A549 (cell line): ENCODE measurements at regions of chr9 and their contacts with region 1.

Region 1: DNA sequence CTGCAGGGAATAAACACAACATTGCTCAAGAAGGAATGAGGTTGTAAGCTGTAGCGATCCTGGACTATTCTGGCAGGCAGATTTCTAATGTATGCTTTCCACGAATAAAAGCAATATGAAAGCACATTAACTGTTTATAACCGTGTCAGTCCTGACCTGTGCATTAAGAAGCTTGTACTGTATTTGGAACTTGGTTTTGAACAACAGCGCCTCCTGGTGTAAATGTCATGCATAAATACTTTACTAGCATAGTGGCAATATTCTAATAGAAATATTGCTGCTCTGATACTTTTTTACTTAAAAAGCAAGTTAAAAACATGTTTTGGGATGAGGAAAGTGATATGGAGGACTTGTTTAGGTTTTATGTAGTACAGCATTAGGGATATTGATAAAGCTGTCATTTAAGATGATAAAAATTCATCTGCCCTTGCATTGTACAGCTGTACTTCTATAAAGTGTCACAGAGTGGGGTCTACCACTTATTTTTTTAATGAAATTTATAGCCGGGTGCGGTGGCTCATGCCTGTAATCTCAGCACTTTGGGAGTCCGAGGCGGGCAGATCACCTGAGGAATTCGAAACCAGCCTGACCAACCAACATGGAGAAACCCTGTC is 70.7 kb upstream of the GNE start:
- DNase-seq: peak; percentile 72 to 82
- ATAC-seq: peak; percentile 78 to 83; a peak in 5 of 6 replicates
- H3K4me3 ChIP-seq: no peak overlapping the region
- H3K27ac ChIP-seq: peak overlapping the region; percentile 63 to 72
- H3K4me1 ChIP-seq: peaks cover 12% of the 10 kb centered on the region
- CTCF ChIP-seq: peak; percentile 95
- EP300 ChIP-seq: no peak
- POLR2A ChIP-seq: no peak
- RAD21 ChIP-seq: peak; percentile 94 to 95

Region 2: DNA sequence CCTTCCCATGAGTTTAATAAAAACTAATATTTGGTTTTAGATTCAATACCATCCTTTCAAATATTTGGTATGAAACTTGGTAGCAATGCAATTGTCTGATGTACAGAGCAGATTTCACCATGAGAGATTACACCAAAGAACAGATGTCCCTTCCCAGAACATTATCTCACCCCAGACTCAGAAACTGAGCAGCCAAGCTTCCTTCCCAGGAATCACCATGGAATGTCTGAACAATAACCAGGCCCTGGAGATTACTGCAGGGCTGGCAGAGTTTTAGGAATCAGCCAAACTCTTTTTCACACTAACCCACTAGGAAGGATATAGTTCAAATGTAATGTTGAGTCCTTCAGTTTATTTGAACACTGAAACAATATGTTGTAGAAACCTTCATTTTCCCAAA is 114.3 kb before region 1 on chr9:
- CTCF ChIA-PET with region 1: interaction called, 13 read pairs
- POLR2A ChIA-PET with region 1: no interaction called
- DNase-seq: no peak
- ATAC-seq: no peak
- H3K4me3 ChIP-seq: no peak overlapping the region
- H3K27ac ChIP-seq: no peak overlapping the region
- H3K4me1 ChIP-seq: 0 out of 3 replicates have a peak, but pooled peaks cover 4% of the 10 kb centered on the region
- CTCF ChIP-seq: no peak
- EP300 ChIP-seq: no peak
- POLR2A ChIP-seq: no peak
- RAD21 ChIP-seq: no peak

Region 3: DNA sequence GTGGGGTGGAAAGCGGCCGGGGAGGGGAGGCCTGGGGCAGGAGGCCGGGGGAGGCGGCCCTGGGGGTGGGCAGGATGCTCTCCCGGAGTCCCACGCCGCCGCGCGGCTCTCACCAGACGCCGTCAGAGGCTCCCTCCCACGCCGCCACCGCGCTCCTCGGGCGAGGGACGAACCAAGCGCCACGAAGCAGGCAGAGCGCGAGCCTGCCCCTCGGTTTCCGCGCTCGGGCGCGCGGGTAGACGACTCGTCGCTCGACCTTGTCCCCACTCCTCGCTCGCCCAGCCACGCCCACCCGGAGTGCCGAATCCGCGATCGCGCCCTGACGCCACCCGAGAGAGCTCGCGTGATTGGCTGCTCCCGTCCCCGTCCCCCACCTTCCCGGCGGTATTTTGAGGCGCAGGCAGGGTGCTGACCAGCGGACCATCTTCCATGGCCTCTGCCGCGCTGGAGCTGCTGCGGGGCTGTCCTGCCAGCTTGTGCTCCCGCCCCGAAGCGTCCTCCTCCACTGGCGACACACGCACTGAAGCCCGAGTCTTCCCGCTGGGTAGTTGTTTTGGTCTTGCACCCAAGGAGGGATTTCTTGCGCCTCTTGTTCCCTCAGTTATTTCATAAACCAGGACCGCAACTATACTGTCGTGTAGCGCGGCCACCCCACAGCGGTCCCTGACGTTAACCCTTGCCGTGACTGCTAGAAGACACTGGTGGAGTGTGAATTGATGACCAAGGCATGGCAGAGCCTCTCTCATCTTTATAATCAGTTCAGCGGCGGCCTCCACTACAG is 70.5 kb before region 1 on chr9 and contains the start of gene GNE:
- CTCF ChIA-PET with region 1: interaction called, 221 read pairs
- POLR2A ChIA-PET with region 1: interaction called, 19 read pairs
- DNase-seq: peak; percentile 83 to 96
- ATAC-seq: peak; percentile 92 to 93
- H3K4me3 ChIP-seq: peak within 1 kb of the TSS; percentile 89
- H3K27ac ChIP-seq: peak within 1 kb of the TSS; percentile 97
- H3K4me1 ChIP-seq: peaks cover 6% of the 10 kb centered on the region
- CTCF ChIP-seq: no peak
- EP300 ChIP-seq: no peak
- POLR2A ChIP-seq: peak; percentile 92
- RAD21 ChIP-seq: peak in 1 of 2 experiments; percentile 12; a peak in 1 of 5 replicates
- polyA plus RNA-seq, gene GNE: 32.9 and 39.5 TPM in 2 replicates

Region 4: DNA sequence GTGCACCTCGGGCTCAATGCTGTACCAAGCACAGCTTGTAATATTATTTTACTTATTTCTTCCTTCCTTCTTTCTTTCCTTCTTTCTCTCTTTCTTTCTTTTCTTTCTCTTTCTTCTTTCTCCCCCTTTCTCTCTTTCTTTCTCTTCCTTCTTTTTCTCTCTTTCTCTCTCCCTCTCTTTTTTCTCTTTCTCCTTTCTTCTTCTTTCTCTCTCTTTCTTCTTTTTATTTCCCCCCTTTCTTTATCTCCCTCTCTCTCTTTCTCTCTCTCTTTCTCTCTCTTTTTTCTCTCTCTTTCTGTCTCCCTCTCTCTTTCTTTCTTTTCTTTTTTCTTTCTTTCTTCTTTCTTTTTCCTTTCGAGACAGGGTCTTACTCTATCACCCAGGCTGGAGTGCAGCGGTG is 37.9 kb before region 1 on chr9:
- CTCF ChIA-PET with region 1: interaction called, 13 read pairs
- POLR2A ChIA-PET with region 1: no interaction called
- DNase-seq: no peak
- ATAC-seq: no peak
- H3K4me3 ChIP-seq: no peak overlapping the region
- H3K27ac ChIP-seq: no peak overlapping the region; a peak in 1 of 6 replicates
- H3K4me1 ChIP-seq: no peaks in the 10 kb centered on the region
- CTCF ChIP-seq: no peak
- EP300 ChIP-seq: no peak
- POLR2A ChIP-seq: no peak
- RAD21 ChIP-seq: no peak

Region 5: GRCh38 chr9:36317764-36318163 is 11.1 kb before region 1 on chr9:
- CTCF ChIA-PET with region 1: interaction called, 76 read pairs
- POLR2A ChIA-PET with region 1: interaction called, 3 read pairs
- DNase-seq: peak; percentile 64 to 95
- ATAC-seq: peak; percentile 53 to 55
- H3K4me3 ChIP-seq: no peak overlapping the region
- H3K27ac ChIP-seq: peak overlapping the region; percentile 87 to 99
- H3K4me1 ChIP-seq: peaks cover 64% of the 10 kb centered on the region
- CTCF ChIP-seq: no peak
- EP300 ChIP-seq: peak in 1 of 2 experiments; percentile 40; a peak in 2 of 5 replicates
- POLR2A ChIP-seq: no peak
- RAD21 ChIP-seq: no peak; a peak in 1 of 5 replicates

Region 6: GRCh38 chr9:36450110-36450732 is 121.3 kb after region 1 on chr9:
- CTCF ChIA-PET with region 1: no interaction called
- POLR2A ChIA-PET with region 1: no interaction called
- DNase-seq: peak; percentile 38 to 60
- ATAC-seq: peak; percentile 59 to 66; a peak in 3 of 6 replicates
- H3K4me3 ChIP-seq: no peak overlapping the region
- H3K27ac ChIP-seq: no peak overlapping the region
- H3K4me1 ChIP-seq: peaks cover 4% of the 10 kb centered on the region; the same call in 1 of the 3 replicates
- CTCF ChIP-seq: peak; percentile 96
- EP300 ChIP-seq: no peak
- POLR2A ChIP-seq: no peak
- RAD21 ChIP-seq: peak; percentile 82 to 91

Region 7: DNA sequence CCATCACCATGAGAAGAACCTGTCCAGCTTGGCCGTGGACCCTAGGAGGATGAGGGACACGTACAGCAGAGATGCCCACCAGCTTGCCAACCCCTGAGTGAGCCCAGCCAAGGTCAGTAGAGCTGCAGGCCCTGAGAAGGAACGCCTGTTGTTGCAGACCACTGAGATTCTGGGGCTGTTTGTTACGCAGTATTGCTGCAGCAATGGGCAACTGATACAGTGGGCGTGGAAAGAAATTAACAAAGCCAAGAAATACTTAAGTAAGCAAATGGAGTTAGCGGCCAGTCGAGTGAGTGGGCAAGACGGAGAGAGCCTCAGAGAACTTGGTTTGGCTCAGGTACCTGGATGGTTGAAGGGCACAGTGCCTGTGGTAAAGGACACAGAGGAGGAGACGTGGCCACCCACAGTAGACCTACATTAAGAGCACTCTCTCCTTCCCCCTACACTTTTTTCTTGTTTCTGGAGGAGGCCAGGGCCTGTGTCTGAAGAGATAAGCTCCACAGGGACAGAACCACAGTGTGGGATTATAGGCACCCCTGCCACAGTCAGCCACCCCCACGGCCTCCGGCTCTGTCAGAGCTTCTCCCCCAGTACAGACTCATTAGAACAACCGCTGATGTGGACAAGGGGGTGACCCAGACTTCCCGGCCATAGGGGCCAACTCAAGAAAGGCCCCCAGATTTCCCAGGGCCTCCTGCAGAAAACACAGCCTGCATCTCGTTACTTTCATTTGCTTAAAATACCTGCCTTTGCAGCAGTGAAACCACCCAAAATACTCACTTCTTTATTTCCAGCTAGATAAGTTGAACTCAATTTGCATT is 1053.5 kb after region 1 on chr9:
- CTCF ChIA-PET with region 1: no interaction called
- POLR2A ChIA-PET with region 1: no interaction called
- DNase-seq: no peak
- ATAC-seq: no peak
- H3K4me3 ChIP-seq: no peak overlapping the region
- H3K27ac ChIP-seq: no peak overlapping the region
- H3K4me1 ChIP-seq: no peaks in the 10 kb centered on the region
- CTCF ChIP-seq: no peak
- EP300 ChIP-seq: no peak
- POLR2A ChIP-seq: no peak
- RAD21 ChIP-seq: no peak